CD4-positive, alpha-beta memory T cell (primary cell): ENCODE measurements at regions of chr21 and their contacts with region 1.

Region 1: GRCh38 chr21:37563641-37564340 is 197.2 kb downstream of the DYRK1A start:
- DNase-seq: peak; percentile 91 to 92 (median 92)
- H3K4me3 ChIP-seq: peak overlapping the region; percentile 94 to 98
- H3K4me3 Mint-ChIP-seq: peak overlapping the region; percentile 95 to 100 (median 97)
- H3K27ac ChIP-seq: peak overlapping the region; percentile 91
- H3K27ac Mint-ChIP-seq: peak overlapping the region; percentile 98 to 100 (median 100)
- H3K4me1 ChIP-seq: peaks cover 17% of the 10 kb centered on the region
- H3K4me1 Mint-ChIP-seq: peaks cover 5 to 28% (median 14%) of the 10 kb centered on the region in 4 donors
- H3K27me3 ChIP-seq: no peaks in the 10 kb centered on the region
- H3K27me3 Mint-ChIP-seq: no peaks in the 10 kb centered on the region

Region 2: DNA sequence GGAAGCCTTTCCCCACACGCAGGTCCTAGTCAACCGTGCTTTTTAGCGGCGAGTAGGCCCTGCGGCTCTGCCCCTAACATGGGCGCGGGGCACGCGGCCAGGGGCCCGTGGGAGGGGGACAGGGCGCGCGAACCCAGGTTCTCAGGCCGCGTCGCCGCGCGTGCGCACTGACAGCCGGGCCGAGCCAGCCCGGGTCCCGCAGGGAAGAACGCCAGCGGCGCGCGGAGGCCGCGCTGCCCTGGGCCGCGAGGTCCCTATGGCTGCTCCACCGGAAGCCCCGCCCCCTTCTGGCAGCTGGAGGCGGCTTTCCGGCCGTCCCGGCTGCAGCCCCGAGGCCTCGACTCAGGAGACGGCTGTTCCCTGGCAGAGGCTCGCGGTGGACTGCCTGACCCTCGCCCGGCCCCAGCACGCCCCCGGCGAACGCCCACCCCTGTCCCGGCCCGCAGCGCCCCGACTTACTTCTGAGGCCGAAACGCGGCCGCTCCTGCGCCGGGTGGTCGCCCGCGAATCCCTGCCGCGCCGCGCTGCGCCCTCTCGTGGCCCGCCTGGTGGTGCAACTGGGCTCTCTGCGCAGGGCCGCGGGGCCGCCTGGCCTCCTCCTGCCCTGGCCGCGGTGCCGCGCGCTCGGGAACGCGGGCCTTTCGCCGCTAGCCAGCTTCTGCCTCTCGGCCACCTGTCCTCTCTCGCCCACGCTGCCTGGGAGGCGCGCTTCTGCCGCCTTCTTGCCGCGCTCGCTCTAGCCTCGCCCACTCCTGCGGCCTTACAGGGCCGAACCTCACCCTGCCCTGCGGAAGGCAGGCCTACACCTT is 573.9 kb before region 1 on chr21:
- CTCF ChIA-PET with region 1: no interaction called
- POLR2A ChIA-PET with region 1: interaction called, 10 read pairs
- intact Hi-C with region 1: loop called (anchors 10 kb)
- DNase-seq: peak; percentile 73 to 90 (median 80)
- H3K4me3 ChIP-seq: peak overlapping the region; percentile 8 to 72
- H3K4me3 Mint-ChIP-seq: peak overlapping the region; percentile 80 to 95 (median 90)
- H3K27ac ChIP-seq: peak overlapping the region; percentile 60
- H3K27ac Mint-ChIP-seq: peak overlapping the region; percentile 62 to 96 (median 91)
- H3K4me1 ChIP-seq: peaks cover 19% of the 10 kb centered on the region
- H3K4me1 Mint-ChIP-seq: peaks cover 13 to 27% (median 19%) of the 10 kb centered on the region in 4 donors
- H3K27me3 ChIP-seq: no peaks in the 10 kb centered on the region
- H3K27me3 Mint-ChIP-seq: no peaks in the 10 kb centered on the region

Region 3: DNA sequence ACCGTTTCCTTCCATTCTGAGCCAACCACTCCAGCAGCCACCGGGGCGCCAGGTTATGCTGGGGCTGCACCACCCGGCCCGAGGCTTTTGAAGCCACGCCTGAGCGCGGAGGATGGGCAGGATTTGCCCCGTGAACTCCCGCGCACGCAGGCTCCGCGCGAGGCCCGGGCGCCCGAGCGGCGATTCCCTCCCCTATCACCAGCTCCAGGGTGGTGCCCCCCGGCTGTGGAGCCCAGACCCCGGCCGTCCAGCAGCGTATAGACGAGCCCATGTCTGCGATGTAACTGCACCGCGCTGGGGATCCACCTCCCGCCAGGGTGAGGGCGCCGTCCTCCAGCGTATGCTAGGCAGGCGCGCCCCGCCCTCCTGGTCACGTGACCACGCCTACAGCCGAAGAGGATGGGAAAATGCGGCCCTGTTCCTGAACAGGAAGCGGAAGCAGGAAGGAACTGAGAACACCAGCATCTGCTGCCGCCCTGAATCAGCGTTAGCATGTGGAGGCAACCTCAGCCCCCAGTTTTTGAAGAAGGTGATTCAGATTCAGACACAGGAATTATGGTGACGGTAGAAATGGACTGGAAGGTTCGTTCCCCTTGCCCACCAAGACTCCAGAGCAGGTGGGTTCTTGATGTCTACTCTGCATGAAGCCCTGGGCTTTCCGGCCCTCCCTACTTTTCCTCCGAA is 342.7 kb before region 1 on chr21:
- CTCF ChIA-PET with region 1: interaction called, 12 read pairs
- POLR2A ChIA-PET with region 1: interaction called, 23 read pairs
- intact Hi-C with region 1: loop called (anchors 1 kb)
- DNase-seq: peak; percentile 86 to 95 (median 88)
- H3K4me3 ChIP-seq: peak overlapping the region; percentile 76 to 86
- H3K4me3 Mint-ChIP-seq: peak overlapping the region; percentile 79 to 96 (median 92)
- H3K27ac ChIP-seq: peak overlapping the region; percentile 75
- H3K27ac Mint-ChIP-seq: peak overlapping the region; percentile 80 to 96 (median 94)
- H3K4me1 ChIP-seq: peaks cover 45% of the 10 kb centered on the region
- H3K4me1 Mint-ChIP-seq: peaks cover 29 to 51% (median 36%) of the 10 kb centered on the region in 4 donors
- H3K27me3 ChIP-seq: no peaks in the 10 kb centered on the region
- H3K27me3 Mint-ChIP-seq: no peaks in the 10 kb centered on the region

Region 4: DNA sequence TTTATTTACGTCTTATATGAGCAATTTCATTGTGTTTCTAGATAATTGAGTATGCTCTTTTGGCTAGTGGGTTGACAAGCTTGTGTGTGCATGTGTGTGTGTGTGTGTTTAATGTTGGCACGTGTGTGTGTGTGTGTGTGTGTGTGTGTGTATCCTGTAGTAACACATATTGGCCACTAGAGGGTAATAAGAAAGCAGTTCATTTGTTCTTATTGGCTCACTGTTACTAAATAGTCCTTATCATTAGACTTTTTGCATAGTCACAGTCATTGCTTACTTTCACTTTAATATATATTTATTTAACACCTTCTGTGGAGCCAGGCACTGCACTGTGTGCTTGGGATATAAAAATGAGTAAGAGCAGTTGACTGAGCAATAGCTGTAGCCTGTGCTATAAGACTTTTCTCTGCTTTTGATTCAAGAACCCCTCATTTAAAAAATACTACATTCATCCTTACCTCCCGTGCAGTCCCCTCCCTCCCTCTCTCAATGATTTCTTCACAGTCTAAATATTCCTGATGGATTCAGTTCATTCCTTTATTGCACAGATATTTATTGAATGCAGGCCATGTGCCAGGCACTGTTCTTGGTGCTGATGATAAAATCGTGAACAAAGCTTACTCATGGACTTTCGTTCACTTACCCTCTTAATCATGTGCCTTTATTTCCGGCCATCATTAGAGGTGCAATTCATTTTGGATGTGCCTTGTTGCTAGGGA is 100.5 kb before region 1 on chr21:
- CTCF ChIA-PET with region 1: interaction called, 4 read pairs
- POLR2A ChIA-PET with region 1: interaction called, 8 read pairs
- intact Hi-C with region 1: loop called (anchors 5 kb)
- DNase-seq: peak; percentile 40 to 51 (median 47)
- H3K4me3 ChIP-seq: peak overlapping the region in 1 of 2 donors; percentile 8
- H3K4me3 Mint-ChIP-seq: peak overlapping the region; percentile 6 to 79 (median 56)
- H3K27ac ChIP-seq: no peak overlapping the region
- H3K27ac Mint-ChIP-seq: peak overlapping the region in 6 of 7 donors; percentile 60 to 94 (median 78)
- H3K4me1 ChIP-seq: peaks cover 65% of the 10 kb centered on the region
- H3K4me1 Mint-ChIP-seq: peaks cover 58 to 87% (median 74%) of the 10 kb centered on the region in 4 donors
- H3K27me3 ChIP-seq: no peaks in the 10 kb centered on the region
- H3K27me3 Mint-ChIP-seq: no peaks in the 10 kb centered on the region

Region 5: DNA sequence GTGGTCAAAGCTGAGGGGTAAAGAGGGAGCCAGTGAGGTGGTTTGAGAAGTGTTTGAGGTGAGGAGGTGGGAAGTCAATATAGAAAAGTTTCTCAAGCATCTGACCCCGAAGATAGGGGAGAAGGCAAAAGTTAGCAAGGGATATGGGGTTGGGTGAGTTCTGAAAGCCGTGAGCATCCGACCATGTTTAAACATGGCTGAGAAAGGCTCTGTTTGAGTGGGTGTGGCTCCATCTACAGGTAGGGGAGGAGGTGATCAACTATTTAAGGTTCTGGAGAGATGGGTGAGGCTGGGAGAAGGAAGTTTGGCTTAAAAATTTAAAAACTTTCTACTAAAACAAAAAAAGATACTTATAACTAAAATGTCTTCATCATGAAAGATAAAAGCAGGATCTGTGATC is 78.7 kb after region 1 on chr21:
- CTCF ChIA-PET with region 1: interaction called, 4 read pairs
- POLR2A ChIA-PET with region 1: interaction called, 3 read pairs
- intact Hi-C with region 1: loop called (anchors 1 kb)
- DNase-seq: peak in 4 of 5 donors; percentile 12 to 32 (median 18)
- H3K4me3 ChIP-seq: no peak overlapping the region
- H3K4me3 Mint-ChIP-seq: no peak overlapping the region
- H3K27ac ChIP-seq: no peak overlapping the region
- H3K27ac Mint-ChIP-seq: peak overlapping the region in 1 of 7 donors; percentile 44
- H3K4me1 ChIP-seq: no peaks in the 10 kb centered on the region
- H3K4me1 Mint-ChIP-seq: peaks cover 0 to 9% (median 1%) of the 10 kb centered on the region in 4 donors
- H3K27me3 ChIP-seq: no peaks in the 10 kb centered on the region
- H3K27me3 Mint-ChIP-seq: peaks cover 24 to 46% of the 10 kb centered on the region in 2 donors

Region 6: DNA sequence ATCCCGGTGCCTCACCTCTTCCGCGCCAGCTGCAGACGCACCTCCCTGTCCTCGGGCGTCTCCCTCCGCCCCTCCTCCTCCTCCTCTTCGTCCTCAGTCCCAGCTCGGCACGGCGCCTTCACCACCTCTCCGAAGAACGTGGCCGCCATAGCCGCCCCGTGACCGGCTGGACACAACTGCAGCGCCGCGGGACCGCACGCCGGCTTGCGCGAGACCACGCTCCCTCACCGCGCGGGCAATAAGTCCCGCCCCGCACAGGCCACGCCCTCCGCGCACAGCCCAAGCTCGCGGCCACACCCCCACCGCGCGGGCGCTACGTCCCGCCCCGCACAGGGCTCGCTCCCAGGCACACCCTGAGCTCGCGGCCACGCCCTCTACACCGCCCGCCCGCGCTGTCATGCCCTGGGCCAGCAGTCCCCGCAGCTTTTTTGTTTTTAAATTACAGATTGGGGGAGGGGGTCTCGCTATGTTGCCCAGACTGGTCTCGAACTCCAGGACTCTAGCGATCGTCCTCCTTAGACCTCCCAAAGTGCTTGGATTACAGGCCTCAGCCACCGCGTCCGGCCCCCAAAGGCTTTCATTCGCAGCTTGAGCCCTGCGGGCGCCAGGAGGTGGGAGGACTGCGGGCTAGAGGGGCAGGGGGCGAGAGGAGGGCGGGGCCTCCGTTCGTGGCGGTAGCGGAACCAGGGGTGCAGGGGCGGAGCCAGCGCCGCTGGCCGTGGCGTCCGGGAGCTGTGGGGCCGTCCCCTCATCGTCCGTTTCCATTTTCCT is 1619.6 kb after region 1 on chr21 and contains the start of gene PSMG1:
- CTCF ChIA-PET with region 1: no interaction called
- POLR2A ChIA-PET with region 1: interaction called, 10 read pairs
- intact Hi-C with region 1: loop called (anchors 5 kb)
- DNase-seq: peak; percentile 92 to 94 (median 93)
- H3K4me3 ChIP-seq: peak within 1 kb of the TSS; percentile 79 to 85
- H3K4me3 Mint-ChIP-seq: peak within 1 kb of the TSS; percentile 95 to 100 (median 98)
- H3K27ac ChIP-seq: peak within 1 kb of the TSS; percentile 84
- H3K27ac Mint-ChIP-seq: peak within 1 kb of the TSS; percentile 95 to 98 (median 97)
- H3K4me1 ChIP-seq: peaks cover 30% of the 10 kb centered on the region
- H3K4me1 Mint-ChIP-seq: peaks cover 34 to 79% (median 48%) of the 10 kb centered on the region in 4 donors
- H3K27me3 ChIP-seq: no peaks in the 10 kb centered on the region
- H3K27me3 Mint-ChIP-seq: no peaks in the 10 kb centered on the region
- total RNA-seq, gene PSMG1: 17.2 to 19.9 TPM